Esophagus muscularis mucosa (tissue), 4 donors: ENCODE measurements at regions of chr3 and their contacts with region 1.

Region 1: DNA sequence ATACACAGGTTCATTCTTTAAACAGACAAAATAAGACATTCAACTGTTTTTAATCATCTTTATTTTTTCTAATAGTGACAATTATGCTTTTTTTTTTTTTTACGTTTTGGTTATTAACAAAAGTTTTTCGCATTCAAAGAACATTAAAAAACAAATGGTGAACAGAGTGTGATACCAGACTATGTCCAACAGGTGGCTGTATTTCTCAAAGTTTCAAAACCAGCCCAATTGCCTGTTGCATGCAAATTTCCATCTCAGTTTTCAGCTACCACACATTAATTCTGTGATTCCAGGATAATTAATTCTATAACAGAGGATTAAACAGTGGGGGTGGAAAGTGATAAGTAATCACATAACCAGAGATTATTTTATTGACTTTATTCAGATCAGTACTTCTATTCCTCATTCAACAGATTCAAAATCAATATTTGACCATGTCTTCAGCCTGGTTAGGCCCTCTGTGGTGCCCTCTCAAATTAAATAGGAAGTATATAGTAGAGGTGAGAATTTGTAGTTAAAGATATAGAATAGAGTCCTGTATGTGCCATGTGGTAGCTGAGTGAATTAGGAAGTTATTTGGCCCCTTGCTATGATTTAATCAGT is 122.2 kb upstream of the DCBLD2 start:
- DNase-seq: no peak
- H3K4me3 ChIP-seq: no peak overlapping the region
- H3K27ac ChIP-seq: no peak overlapping the region
- H3K4me1 ChIP-seq: no peaks in the 10 kb centered on the region
- H3K27me3 ChIP-seq: no peaks in the 10 kb centered on the region
- CTCF ChIP-seq: peak; percentile 63 to 75 (median 65)
- EP300 ChIP-seq: no peak
- POLR2A ChIP-seq: no peak

Region 2: DNA sequence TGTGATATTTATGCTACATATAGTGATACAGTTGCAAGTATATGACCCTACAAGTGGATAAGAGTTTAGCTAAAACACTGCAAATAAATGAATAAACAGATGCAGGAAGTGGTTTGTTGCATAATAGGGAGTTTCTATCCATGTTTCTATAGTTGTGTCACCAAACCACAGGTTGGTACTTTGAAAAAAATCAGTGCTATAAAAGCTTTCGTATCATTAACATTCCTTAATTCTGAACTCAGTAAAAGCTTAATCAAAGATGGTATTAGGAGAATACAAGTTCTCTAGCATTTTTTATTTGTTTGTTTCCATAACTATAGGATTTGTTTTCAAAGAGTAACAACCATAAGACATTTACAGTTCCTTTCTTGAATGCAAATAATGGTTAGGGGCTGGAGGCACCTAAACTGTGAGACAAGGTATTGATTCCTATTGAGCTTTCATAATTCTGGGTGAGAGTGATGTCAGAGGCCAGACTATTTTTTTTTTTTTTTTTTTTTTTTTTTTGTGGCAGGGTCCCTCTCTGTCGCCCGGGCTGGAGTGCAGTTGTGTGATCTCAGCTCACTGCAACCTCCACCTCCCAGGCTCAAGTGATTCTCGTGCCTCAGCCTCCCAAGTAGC is 459.9 kb before region 1 on chr3:
- intact Hi-C with region 1: no loop called
- DNase-seq: no peak
- H3K4me3 ChIP-seq: no peak overlapping the region
- H3K27ac ChIP-seq: no peak overlapping the region
- H3K4me1 ChIP-seq: no peaks in the 10 kb centered on the region
- H3K27me3 ChIP-seq: no peaks in the 10 kb centered on the region
- CTCF ChIP-seq: no peak
- EP300 ChIP-seq: no peak
- POLR2A ChIP-seq: no peak

Region 3: DNA sequence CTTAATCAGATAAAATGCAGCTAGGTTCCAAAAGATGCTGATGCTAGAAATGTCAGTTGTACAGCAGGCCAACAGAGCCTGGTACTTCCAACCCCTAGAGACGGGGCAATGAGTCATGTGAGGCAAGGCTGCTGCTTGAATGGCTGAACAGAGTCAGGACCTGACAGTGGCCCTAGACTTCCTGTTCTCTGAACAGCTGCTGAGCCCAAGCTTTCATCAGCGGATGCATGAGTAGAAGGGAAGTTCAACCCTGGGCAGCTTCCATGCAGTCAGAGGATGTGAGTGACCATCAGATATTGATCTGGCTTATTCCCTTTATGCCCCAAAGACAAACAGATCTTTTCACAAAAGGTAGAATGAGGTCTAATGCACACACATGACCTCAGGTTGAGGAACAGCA is 331.8 kb after region 1 on chr3:
- intact Hi-C with region 1: no loop called
- DNase-seq: no peak
- H3K4me3 ChIP-seq: no peak overlapping the region
- H3K27ac ChIP-seq: no peak overlapping the region
- H3K4me1 ChIP-seq: no peaks in the 10 kb centered on the region
- H3K27me3 ChIP-seq: no peaks in the 10 kb centered on the region
- CTCF ChIP-seq: no peak
- EP300 ChIP-seq: no peak
- POLR2A ChIP-seq: no peak

Region 4: GRCh38 chr3:99753268-99753975 is 729.7 kb after region 1 on chr3:
- intact Hi-C with region 1: loop called (anchors 5 kb)
- DNase-seq: no peak
- H3K4me3 ChIP-seq: no peak overlapping the region
- H3K27ac ChIP-seq: no peak overlapping the region
- H3K4me1 ChIP-seq: peaks cover 2 to 21% (median 12%) of the 10 kb centered on the region in 4 donors
- H3K27me3 ChIP-seq: no peaks in the 10 kb centered on the region
- CTCF ChIP-seq: peak; percentile 60 to 81 (median 71)
- EP300 ChIP-seq: no peak
- POLR2A ChIP-seq: no peak

Region 5: DNA sequence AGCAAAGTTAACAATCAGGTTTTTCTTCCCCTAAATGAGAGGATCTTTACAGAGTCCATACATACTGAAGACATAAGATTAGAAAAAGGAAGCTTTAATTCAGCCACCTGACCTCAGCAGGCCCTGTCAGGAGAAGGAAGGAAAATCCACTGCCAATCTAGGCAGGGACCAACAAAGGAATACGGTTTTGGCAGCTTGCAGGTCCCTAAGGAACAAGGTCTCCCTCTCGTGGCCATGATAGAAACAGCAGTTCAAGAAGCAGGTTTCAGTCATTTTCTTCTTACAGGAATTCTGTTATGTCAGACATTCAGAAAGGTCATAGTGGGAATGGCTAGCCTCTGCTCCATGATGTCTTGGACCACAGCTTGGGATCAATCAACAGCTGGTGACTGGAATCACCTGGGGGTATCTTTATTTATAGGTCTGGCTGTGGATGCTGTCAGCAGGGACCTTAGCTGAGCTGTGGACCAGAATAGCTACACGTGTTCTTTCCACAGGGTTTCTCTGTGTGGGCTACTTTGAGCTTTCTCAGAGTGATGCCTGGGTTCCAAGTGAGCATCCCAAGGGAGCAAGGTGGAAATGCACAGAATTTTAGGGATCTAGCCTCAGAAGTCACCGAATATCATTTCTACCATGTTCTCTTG is 784.6 kb after region 1 on chr3:
- intact Hi-C with region 1: loop called (anchors 2 kb)
- DNase-seq: no peak
- H3K4me3 ChIP-seq: no peak overlapping the region
- H3K27ac ChIP-seq: no peak overlapping the region
- H3K4me1 ChIP-seq: peaks cover 0 to 7% (median 0%) of the 10 kb centered on the region in 4 donors
- H3K27me3 ChIP-seq: no peaks in the 10 kb centered on the region
- CTCF ChIP-seq: peak; percentile 70 to 86 (median 71)
- EP300 ChIP-seq: no peak
- POLR2A ChIP-seq: no peak